Caco-2 (cell line): ENCODE measurements at regions of chr16 and their contacts with region 1.

Region 1: GRCh38 chr16:5071681-5072333 is at the start of gene ALG1:
- DNase-seq: peak; percentile 85 to 90
- H3K4me3 ChIP-seq: peak within 1 kb of the TSS; percentile 67
- H3K4me3 Mint-ChIP-seq: peak within 1 kb of the TSS; percentile 96
- H3K27ac Mint-ChIP-seq: peak within 1 kb of the TSS; percentile 89
- H3K4me1 ChIP-seq: peaks cover 7% of the 10 kb centered on the region; the same call in 1 of the 2 replicates
- H3K4me1 Mint-ChIP-seq: no peaks in the 10 kb centered on the region
- H3K27me3 ChIP-seq: no peaks in the 10 kb centered on the region
- H3K27me3 Mint-ChIP-seq: peaks cover 3% of the 10 kb centered on the region
- CTCF ChIP-seq: no peak
- total RNA-seq, gene ALG1: 39.2 and 42.0 TPM in 2 replicates

Region 2: GRCh38 chr16:4987580-4988374 is 84.0 kb before region 1 on chr16:
- CTCF ChIA-PET with region 1: no interaction called
- POLR2A ChIA-PET with region 1: no interaction called
- intact Hi-C with region 1: no loop called
- DNase-seq: peak in 1 of 2 experiments; percentile 13
- H3K4me3 ChIP-seq: peak overlapping the region; percentile 32
- H3K4me3 Mint-ChIP-seq: peak overlapping the region; percentile 51
- H3K27ac Mint-ChIP-seq: no peak overlapping the region
- H3K4me1 ChIP-seq: no peaks in the 10 kb centered on the region
- H3K4me1 Mint-ChIP-seq: no peaks in the 10 kb centered on the region
- H3K27me3 ChIP-seq: no peaks in the 10 kb centered on the region
- H3K27me3 Mint-ChIP-seq: peaks cover 8% of the 10 kb centered on the region
- CTCF ChIP-seq: no peak

Region 3: GRCh38 chr16:5001571-5001970 is 70.2 kb before region 1 on chr16:
- CTCF ChIA-PET with region 1: no interaction called
- POLR2A ChIA-PET with region 1: no interaction called
- intact Hi-C with region 1: no loop called
- DNase-seq: no peak
- H3K4me3 ChIP-seq: no peak overlapping the region
- H3K4me3 Mint-ChIP-seq: no peak overlapping the region
- H3K27ac Mint-ChIP-seq: no peak overlapping the region
- H3K4me1 ChIP-seq: no peaks in the 10 kb centered on the region
- H3K4me1 Mint-ChIP-seq: no peaks in the 10 kb centered on the region
- H3K27me3 ChIP-seq: no peaks in the 10 kb centered on the region; the same call in 1 of the 2 replicates
- H3K27me3 Mint-ChIP-seq: peaks cover 8% of the 10 kb centered on the region
- CTCF ChIP-seq: no peak

Region 4: DNA sequence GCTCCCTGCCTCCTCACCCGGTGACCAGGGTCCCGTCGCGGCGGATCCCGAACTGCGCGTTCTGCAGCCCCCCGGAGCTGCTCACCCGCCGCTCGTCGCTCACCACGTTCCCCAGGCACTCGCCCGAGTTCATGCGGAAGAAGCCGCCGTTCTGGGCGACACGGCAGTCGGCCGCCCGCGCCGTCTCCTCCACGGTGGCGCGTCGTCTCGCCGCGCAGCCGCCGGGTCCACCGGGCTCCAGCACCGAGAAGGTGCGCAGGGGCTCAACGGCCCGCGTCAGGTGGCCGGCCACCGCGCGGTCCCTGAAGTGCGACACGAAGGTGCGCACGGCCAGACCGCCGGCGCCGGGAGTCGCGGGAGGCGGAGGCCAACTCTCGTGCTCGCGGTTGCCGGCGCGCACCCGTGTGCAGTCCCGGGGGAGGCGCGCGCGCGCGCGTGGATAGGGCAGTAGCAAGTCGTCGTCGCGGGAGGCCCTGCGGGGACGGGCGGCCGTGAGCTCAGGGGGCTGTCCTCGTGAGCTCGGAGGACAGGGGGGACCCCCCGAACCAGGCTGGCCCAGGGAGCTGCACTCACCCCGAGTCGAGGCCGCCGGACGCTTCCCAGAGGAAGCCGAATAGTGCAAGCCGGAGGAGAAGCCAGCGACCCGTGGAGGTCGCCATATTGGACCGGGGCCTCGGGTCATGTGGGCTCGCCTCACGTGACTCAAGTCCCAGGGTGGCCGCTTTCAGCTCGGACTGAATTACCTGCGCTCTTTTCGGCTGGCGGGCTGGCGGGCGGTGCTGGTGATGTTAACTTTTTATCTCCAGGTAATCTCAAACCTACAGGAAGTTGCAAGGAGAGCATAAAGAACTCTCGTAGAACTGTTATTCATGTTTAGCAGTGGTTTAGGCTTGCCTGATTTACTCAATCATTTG is 38.3 kb before region 1 on chr16 and contains the start of gene NAGPA:
- CTCF ChIA-PET with region 1: interaction called, 3 read pairs
- POLR2A ChIA-PET with region 1: no interaction called
- intact Hi-C with region 1: loop called (anchors 5 kb)
- DNase-seq: peak; percentile 86 to 88
- H3K4me3 ChIP-seq: peak within 1 kb of the TSS; percentile 96
- H3K4me3 Mint-ChIP-seq: peak within 1 kb of the TSS; percentile 68
- H3K27ac Mint-ChIP-seq: peak within 1 kb of the TSS; percentile 95
- H3K4me1 ChIP-seq: peaks cover 23% of the 10 kb centered on the region
- H3K4me1 Mint-ChIP-seq: peaks cover 36% of the 10 kb centered on the region
- H3K27me3 ChIP-seq: no peaks in the 10 kb centered on the region
- H3K27me3 Mint-ChIP-seq: no peaks in the 10 kb centered on the region
- CTCF ChIP-seq: peak in 1 of 2 experiments; percentile 8
- total RNA-seq, gene NAGPA: 15.9 and 16.7 TPM in 2 replicates

Region 5: DNA sequence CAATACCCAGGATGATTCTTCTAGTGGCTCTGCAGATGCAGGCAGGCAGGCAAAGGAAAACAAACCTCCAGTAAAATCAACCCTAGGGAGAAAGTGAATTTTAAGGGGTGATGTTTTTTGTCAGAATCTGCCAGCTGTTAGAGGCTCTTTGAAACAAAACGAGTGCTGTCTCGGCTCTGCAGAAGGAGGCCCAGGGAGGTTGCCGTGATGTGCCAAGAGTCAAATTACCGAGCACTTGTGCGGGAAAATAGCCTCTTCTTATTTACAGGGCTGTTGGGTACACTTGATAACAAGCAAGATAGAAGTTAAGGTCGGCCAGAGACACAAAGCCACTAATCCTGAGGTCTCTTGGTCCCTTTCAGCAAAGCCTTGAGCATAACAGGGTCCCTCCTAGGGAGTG is 94.7 kb after region 1 on chr16:
- CTCF ChIA-PET with region 1: no interaction called
- POLR2A ChIA-PET with region 1: no interaction called
- intact Hi-C with region 1: no loop called
- DNase-seq: no peak
- H3K4me3 ChIP-seq: no peak overlapping the region
- H3K4me3 Mint-ChIP-seq: no peak overlapping the region
- H3K27ac Mint-ChIP-seq: no peak overlapping the region
- H3K4me1 ChIP-seq: no peaks in the 10 kb centered on the region
- H3K4me1 Mint-ChIP-seq: no peaks in the 10 kb centered on the region
- H3K27me3 ChIP-seq: no peaks in the 10 kb centered on the region
- H3K27me3 Mint-ChIP-seq: peaks cover 11% of the 10 kb centered on the region
- CTCF ChIP-seq: no peak

Region 6: GRCh38 chr16:5200123-5200522 is 128.3 kb after region 1 on chr16:
- CTCF ChIA-PET with region 1: no interaction called
- POLR2A ChIA-PET with region 1: no interaction called
- intact Hi-C with region 1: no loop called
- DNase-seq: no peak
- H3K4me3 ChIP-seq: no peak overlapping the region
- H3K4me3 Mint-ChIP-seq: no peak overlapping the region
- H3K27ac Mint-ChIP-seq: no peak overlapping the region
- H3K4me1 ChIP-seq: no peaks in the 10 kb centered on the region
- H3K4me1 Mint-ChIP-seq: no peaks in the 10 kb centered on the region
- H3K27me3 ChIP-seq: no peaks in the 10 kb centered on the region
- H3K27me3 Mint-ChIP-seq: peaks cover 3% of the 10 kb centered on the region
- CTCF ChIP-seq: no peak